Right cardiac atrium (tissue), 5 donors: ENCODE measurements at regions of chr11 and their contacts with region 1.

Region 1: DNA sequence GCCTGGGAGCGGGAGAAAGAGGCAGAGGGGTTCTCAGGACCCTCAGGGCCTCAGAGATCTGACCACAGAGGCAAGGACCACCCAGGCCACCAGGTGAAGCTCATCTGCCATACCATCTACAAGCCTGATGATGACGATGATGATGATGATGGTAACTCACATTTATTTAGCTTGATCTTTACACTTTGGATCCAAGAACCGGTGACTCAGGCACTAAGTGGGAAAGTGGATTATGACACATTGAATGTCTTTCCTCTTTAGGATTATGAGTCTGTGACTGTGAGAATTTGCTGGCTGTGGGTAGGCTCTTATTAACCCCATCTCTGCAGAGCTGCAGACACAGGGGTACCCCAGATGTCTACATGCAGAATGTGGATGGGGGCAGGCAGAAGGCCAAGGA is 110.3 kb downstream of the DSCAML1 start:
- DNase-seq: no peak
- ATAC-seq: no peak
- H3K4me3 ChIP-seq: no peak overlapping the region
- H3K27ac ChIP-seq: no peak overlapping the region
- H3K4me1 ChIP-seq: peaks cover 3% of the 10 kb centered on the region
- H3K27me3 ChIP-seq: no peaks in the 10 kb centered on the region

Region 2: DNA sequence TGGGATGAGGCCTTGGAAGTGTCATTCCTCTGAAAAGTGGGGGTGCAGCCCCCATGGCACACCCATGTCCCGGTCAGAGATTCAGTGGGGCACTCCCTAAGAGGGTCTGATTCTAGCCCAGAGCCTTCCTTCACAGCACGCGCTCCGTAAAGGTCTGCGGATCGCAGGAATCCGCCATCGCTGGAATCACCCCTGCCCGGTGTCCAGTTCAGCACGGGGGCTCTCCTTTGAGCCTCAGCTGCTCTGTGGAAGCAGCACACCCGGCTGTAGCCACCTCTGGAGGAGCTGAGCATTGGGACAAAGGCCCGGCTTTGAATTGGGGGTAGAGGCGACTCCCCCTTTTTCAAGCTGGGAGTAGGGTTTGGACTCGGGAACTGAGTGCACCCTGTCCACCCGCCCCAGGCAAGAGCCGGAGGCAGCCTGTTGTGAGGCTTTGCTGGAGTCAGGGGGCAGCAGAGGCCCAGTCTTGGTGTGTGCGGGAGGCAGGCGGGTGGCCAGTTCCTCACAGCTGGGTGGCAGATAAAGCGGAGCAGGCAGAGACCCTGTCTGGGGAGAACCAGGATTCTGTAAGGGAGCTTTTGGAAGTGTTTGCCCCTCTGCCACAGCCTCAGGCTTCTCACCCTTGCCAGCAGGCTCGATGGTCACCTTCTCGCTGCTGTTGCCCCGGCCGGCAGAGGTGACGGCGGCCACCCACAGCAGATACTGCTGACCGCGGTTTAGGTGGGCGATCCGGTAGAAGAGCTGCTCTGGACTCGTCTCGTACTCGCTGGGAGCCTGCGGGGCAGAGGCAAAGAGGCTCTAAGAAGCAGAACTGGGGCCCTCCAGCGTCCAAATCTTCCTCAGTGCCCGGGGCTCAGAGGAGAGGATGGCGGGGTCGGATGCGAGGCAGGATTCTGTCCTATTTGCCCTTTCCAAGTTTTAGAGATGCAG is 243.2 kb before region 1 on chr11:
- intact Hi-C with region 1: no loop called
- DNase-seq: peak; percentile 67 to 88 (median 87)
- ATAC-seq: peak; percentile 85 to 86
- H3K4me3 ChIP-seq: no peak overlapping the region
- H3K27ac ChIP-seq: no peak overlapping the region
- H3K4me1 ChIP-seq: no peaks in the 10 kb centered on the region
- H3K27me3 ChIP-seq: no peaks in the 10 kb centered on the region

Region 3: GRCh38 chr11:117535261-117535781 is 151.4 kb before region 1 on chr11:
- intact Hi-C with region 1: loop called in 1 of 4 experiments (anchors 10 kb)
- DNase-seq: peak; percentile 62 to 86 (median 86)
- ATAC-seq: peak; percentile 31 to 40
- H3K4me3 ChIP-seq: no peak overlapping the region
- H3K27ac ChIP-seq: no peak overlapping the region
- H3K4me1 ChIP-seq: no peaks in the 10 kb centered on the region
- H3K27me3 ChIP-seq: no peaks in the 10 kb centered on the region